Left colon (tissue), 2 donors: ENCODE measurements at regions of chr21 and their contacts with region 1.

Region 1: DNA sequence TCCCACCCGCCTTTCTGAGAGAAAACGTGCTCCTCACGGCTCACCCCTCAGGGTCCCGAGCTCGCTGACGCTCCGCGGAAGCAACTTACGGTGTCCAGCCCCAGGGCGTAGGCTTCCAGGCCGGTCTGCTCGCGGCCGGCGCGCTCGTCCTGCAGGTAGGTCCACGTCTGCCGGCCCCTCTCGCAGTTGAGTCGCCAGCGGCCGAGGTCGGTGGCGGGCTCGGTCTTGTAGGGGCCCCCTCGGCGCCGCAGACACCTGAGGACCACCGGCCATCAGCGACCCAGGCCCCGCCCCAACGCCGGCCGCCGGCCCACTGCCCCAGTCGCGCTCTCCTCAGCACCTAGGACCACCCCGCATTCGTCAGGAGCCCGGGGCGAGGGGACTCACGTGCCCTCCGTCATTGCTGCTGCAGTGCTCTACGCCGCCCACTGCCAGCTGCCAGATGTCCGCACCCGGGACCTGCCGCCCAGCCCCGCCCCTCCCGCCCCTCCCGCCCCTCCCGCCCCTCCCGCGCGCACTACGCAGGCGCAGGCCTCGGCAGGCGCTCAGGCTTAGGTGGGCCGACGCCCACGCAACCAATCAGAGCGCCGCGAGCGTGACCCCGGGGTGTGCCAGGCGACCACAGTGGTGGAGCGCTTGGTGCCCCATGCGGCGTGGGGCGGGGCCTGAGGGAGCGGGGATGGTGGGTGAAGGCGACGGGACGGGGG is at the start of gene LSS:
- DNase-seq: peak; percentile 99
- ATAC-seq: peak; percentile 87
- total RNA-seq, gene LSS: 65.6 to 140 TPM

Region 2: DNA sequence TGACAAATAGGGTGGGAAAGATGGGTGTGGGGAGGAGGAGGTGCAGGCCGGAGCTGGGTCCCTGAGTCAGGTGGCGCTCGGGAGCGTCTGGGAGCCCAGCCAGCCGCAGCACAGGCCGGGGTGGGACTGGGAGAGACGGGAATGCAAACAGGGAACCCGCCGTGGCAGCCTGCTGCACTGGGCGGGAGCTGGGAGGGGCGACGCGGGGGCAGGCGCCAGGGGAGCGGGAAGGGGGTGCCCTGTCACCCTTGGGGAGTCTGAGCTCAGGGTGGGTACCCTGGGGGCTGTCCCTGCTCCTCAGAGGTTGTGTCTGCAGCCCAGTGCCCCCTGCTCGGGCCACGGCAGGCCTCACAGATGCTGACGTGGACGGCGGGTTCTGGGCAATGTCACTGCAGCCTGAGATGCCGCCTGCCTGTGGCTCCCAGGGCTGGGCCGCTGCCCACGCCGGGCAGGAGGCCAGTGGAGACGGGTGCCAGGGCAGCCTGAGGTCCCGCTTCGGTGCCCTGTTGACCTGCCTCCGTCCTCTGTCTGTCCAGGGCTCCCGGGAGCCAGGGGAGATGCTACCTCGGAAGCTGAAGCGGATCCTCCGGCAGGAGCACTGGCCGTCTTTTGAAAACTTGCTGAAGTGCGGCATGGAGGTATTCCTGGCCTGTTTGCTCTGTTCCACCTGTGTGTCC is 1789.8 kb before region 1 on chr21:
- intact Hi-C with region 1: no loop called
- DNase-seq: peak; percentile 51 to 53
- ATAC-seq: peak; percentile 89

Region 3: GRCh38 chr21:46144464-46145070 is 83.9 kb before region 1 on chr21:
- intact Hi-C with region 1: loop called in 1 of 2 experiments (anchors 10 kb)
- DNase-seq: no peak
- ATAC-seq: no peak